ENCODE measurements at regions of chr14 and their contacts with region 1.

Region 1: GRCh38 chr14:99982537-99983250 is 82.5 kb upstream of the EVL start:
- DNase-seq: peak; percentile 74
- H3K4me3 Mint-ChIP-seq: no peak overlapping the region
- H3K27ac Mint-ChIP-seq: no peak overlapping the region
- H3K4me1 Mint-ChIP-seq: peaks cover 22% of the 10 kb centered on the region
- H3K27me3 Mint-ChIP-seq: no peaks in the 10 kb centered on the region
- CTCF ChIP-seq: peak; percentile 87

Region 2: GRCh38 chr14:99995700-99996356 is 13.1 kb after region 1 on chr14:
- CTCF ChIA-PET with region 1: interaction called, 25 read pairs
- POLR2A ChIA-PET with region 1: interaction called, 3 read pairs
- intact Hi-C with region 1: no loop called
- DNase-seq: peak; percentile 71
- H3K4me3 Mint-ChIP-seq: no peak overlapping the region
- H3K27ac Mint-ChIP-seq: no peak overlapping the region
- H3K4me1 Mint-ChIP-seq: peaks cover 24% of the 10 kb centered on the region
- H3K27me3 Mint-ChIP-seq: no peaks in the 10 kb centered on the region
- CTCF ChIP-seq: peak; percentile 60

Region 3: DNA sequence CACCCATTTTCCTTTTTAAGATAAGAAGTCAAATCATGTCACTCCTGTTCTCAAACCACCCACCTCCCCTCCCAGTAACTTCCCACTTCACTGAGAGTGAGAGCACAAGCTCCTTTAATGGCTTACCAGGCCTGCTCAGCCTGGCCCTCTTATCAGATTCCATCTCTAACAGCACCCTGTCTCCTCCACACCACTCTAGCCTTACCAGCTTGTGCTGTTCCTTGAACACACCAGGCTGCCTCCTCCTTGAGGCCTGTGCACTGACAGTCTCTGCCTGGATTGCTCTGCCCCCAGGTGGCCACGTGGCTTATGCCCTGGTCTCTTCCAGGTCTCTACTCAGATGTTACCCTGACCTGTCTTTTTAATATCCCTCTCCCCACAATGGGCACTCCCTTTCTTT is 42.4 kb after region 1 on chr14:
- CTCF ChIA-PET with region 1: interaction called, 48 read pairs
- POLR2A ChIA-PET with region 1: interaction called, 40 read pairs
- intact Hi-C with region 1: loop called (anchors 1 kb)
- DNase-seq: peak; percentile 65
- H3K4me3 Mint-ChIP-seq: no peak overlapping the region
- H3K27ac Mint-ChIP-seq: peak overlapping the region; percentile 57
- H3K4me1 Mint-ChIP-seq: peaks cover 34% of the 10 kb centered on the region
- H3K27me3 Mint-ChIP-seq: no peaks in the 10 kb centered on the region
- CTCF ChIP-seq: peak; percentile 48

Region 4: GRCh38 chr14:100073576-100074340 is 91.1 kb after region 1 on chr14:
- CTCF ChIA-PET with region 1: interaction called, 21 read pairs
- POLR2A ChIA-PET with region 1: interaction called, 3 read pairs
- intact Hi-C with region 1: loop called (anchors 1 kb)
- DNase-seq: no peak
- H3K4me3 Mint-ChIP-seq: no peak overlapping the region
- H3K27ac Mint-ChIP-seq: no peak overlapping the region
- H3K4me1 Mint-ChIP-seq: peaks cover 35% of the 10 kb centered on the region
- H3K27me3 Mint-ChIP-seq: no peaks in the 10 kb centered on the region
- CTCF ChIP-seq: no peak